Endothelial cell of umbilical vein (primary cell): ENCODE measurements at regions of chr1 and their contacts with region 1.

Region 1: GRCh38 chr1:67626495-67627235 is 58.3 kb upstream of the GADD45A start:
- DNase-seq: peak; percentile 99
- H3K4me3 ChIP-seq: no peak overlapping the region
- H3K27ac ChIP-seq: peak overlapping the region; percentile 98
- H3K4me1 ChIP-seq: peaks cover 56% of the 10 kb centered on the region
- H3K27me3 ChIP-seq: no peaks in the 10 kb centered on the region
- CTCF ChIP-seq: no peak
- POLR2A ChIP-seq: peak; percentile 14

Region 2: GRCh38 chr1:67590329-67590728 is 36.3 kb before region 1 on chr1:
- CTCF ChIA-PET with region 1: no interaction called
- POLR2A ChIA-PET with region 1: no interaction called
- dilution Hi-C with region 1: no loop called
- intact Hi-C with region 1: loop called (anchors 1 kb)
- DNase-seq: peak; percentile 97
- H3K4me3 ChIP-seq: no peak overlapping the region
- H3K27ac ChIP-seq: peak overlapping the region; percentile 38
- H3K4me1 ChIP-seq: peaks cover 3% of the 10 kb centered on the region
- H3K27me3 ChIP-seq: no peaks in the 10 kb centered on the region
- CTCF ChIP-seq: no peak
- POLR2A ChIP-seq: no peak

Region 3: GRCh38 chr1:67664048-67664447 is 37.4 kb after region 1 on chr1:
- CTCF ChIA-PET with region 1: no interaction called
- POLR2A ChIA-PET with region 1: no interaction called
- dilution Hi-C with region 1: no loop called
- intact Hi-C with region 1: loop called (anchors 2 kb)
- DNase-seq: peak; percentile 53
- H3K4me3 ChIP-seq: no peak overlapping the region
- H3K27ac ChIP-seq: peak overlapping the region; percentile 25
- H3K4me1 ChIP-seq: peaks cover 12% of the 10 kb centered on the region
- H3K27me3 ChIP-seq: no peaks in the 10 kb centered on the region
- CTCF ChIP-seq: no peak
- POLR2A ChIP-seq: no peak

Region 4: DNA sequence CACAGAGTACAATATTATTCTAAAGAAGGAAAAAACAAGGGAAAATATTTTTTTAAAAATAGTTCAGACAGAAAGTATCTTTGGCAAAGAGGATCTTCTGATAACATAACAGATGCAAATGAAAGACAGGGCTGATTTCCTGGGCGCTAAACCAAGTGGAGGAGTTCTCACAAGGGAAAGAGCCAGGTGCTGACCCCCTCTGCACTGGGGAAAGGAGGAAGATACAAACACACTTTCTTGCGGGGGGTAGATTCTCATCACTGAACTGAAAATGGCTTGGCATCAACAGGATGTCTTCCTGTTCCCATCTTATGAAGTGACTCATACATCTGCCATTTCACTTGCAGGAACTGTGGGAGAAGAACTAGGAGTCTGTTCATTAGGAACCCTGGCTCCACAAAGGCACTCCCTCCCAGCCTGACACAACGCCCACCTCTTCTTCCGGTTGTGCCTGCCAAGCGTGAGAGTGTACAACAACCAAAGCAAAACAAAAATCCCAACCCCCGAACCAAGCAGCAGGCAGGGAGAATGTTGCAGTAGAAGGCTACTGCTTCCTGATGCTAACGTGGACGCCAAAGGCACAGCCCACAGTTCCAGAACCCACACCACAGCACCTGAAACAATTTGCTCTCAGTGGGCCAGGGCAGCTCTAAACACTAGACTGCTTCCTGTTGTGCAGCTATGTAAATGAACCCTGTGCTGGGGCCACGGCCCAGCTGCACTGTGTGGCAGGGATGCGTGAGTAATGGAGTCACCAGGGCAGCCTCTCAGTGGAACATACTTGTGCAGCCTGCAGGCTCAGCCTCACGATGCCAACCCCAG is 109.4 kb after region 1 on chr1:
- CTCF ChIA-PET with region 1: no interaction called
- POLR2A ChIA-PET with region 1: no interaction called
- dilution Hi-C with region 1: no loop called
- intact Hi-C with region 1: loop called (anchors 1 kb)
- DNase-seq: peak; percentile 98
- H3K4me3 ChIP-seq: peak overlapping the region in 1 of 3 experiments; percentile 25
- H3K27ac ChIP-seq: peak overlapping the region; percentile 89
- H3K4me1 ChIP-seq: peaks cover 38% of the 10 kb centered on the region
- H3K27me3 ChIP-seq: no peaks in the 10 kb centered on the region
- CTCF ChIP-seq: no peak
- POLR2A ChIP-seq: no peak